ENCODE measurements at regions of chr20 and their contacts with region 1.

Region 1: GRCh38 chr20:50070991-50071888 is 41.7 kb downstream of the UBE2V1 start:
- DNase-seq: peak; percentile 98
- ATAC-seq: peak; percentile 99
- H3K4me3 ChIP-seq: peak overlapping the region; percentile 68
- H3K27ac ChIP-seq: no peak overlapping the region
- H3K4me1 ChIP-seq: 0 out of 2 replicates have a peak, but pooled peaks cover 4% of the 10 kb centered on the region
- H3K27me3 ChIP-seq: no peaks in the 10 kb centered on the region
- CTCF ChIP-seq: peak; percentile 100

Region 2: GRCh38 chr20:50027611-50028105 is 43.6 kb before region 1 on chr20:
- CTCF ChIA-PET with region 1: interaction called, 14 read pairs
- POLR2A ChIA-PET with region 1: no interaction called
- intact Hi-C with region 1: no loop called
- DNase-seq: peak; percentile 96
- ATAC-seq: peak; percentile 71
- H3K4me3 ChIP-seq: no peak overlapping the region
- H3K27ac ChIP-seq: peak overlapping the region; percentile 43
- H3K4me1 ChIP-seq: peaks cover 32% of the 10 kb centered on the region
- H3K27me3 ChIP-seq: no peaks in the 10 kb centered on the region
- CTCF ChIP-seq: no peak